ENCODE measurements at regions of chr19 and their contacts with region 1.

Region 1: DNA sequence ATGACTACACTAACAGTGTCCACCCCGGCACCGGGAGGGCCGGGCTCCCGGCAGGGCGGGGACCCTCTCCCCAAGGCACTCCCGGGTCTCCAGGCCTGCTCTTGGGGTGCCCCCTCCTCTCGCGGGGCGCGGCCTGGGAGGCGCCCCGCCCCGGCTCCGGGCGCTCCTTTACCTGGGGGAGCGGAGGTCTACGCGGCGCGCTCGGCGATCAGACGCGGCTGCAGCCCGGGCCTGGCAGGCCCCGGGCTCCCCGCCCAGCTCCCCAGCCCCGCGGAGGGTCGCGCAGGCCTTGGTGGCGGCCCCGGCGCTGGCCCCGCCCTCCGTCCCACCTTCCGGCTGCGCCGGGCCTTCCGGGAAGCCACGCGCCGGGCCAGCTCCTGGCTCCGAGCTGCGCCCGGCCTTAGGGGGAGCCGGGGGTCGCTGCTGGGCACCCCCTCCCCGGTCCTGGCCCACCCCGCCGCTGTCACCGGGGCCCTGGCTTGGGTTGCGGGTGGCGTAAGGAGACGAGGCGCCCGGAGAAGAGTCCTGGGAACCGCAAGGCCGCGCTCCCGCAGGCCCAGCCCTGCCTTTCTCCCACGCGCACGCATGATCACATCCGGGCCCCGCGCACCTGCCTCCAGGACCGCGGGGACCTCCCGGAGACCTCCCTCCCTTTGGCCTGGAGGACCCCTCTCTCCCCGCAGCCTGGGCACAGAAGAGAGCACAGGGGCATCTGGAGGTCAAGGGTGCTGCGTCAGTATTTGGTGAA is at the start of gene C19orf12:
- H3K4me3 ChIP-seq: peak within 1 kb of the TSS; percentile 65
- H3K27ac ChIP-seq: peak within 1 kb of the TSS; percentile 96
- H3K4me1 ChIP-seq: peaks cover 16% of the 10 kb centered on the region
- CTCF ChIP-seq: 0 out of 2 replicates have a peak, but pooled peaks have one; percentile 34

Region 2: DNA sequence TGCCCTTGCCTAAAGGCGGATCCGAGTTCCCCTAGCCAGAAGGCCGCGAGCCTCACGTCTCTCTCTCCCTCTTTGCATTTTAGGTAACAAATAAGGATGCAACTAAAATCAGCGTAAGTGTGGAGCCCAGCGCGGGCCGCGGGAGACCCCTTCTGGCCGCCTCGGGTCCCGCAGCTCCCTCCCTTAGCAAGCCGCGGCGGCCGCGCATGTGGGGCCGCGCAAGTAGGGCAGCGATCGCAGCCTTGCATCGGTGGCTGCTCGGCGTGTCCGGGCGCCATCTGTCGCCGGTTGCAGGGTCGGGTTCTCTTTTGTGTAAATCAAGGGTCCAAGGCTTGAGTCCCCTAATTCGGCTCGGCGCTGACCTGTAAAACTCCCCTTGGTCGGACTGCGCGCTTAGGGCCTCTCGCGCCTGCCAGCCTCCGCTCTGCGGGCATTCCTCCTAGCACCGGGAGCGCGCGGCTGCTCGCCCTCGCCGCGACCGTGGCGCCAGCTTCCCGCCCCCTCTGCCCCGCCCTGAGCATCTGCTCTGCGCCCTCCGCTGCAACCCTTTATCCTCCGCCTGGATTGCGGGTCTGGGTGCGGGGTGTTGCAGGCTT is 186.7 kb before region 1 on chr19:
- CTCF ChIA-PET with region 1: interaction called, 10 read pairs
- POLR2A ChIA-PET with region 1: no interaction called
- H3K4me3 ChIP-seq: peak overlapping the region; percentile 39
- H3K27ac ChIP-seq: peak overlapping the region; percentile 55; the same call in 1 of the 2 replicates
- H3K4me1 ChIP-seq: peaks cover 37% of the 10 kb centered on the region
- CTCF ChIP-seq: peak; percentile 99

Region 3: DNA sequence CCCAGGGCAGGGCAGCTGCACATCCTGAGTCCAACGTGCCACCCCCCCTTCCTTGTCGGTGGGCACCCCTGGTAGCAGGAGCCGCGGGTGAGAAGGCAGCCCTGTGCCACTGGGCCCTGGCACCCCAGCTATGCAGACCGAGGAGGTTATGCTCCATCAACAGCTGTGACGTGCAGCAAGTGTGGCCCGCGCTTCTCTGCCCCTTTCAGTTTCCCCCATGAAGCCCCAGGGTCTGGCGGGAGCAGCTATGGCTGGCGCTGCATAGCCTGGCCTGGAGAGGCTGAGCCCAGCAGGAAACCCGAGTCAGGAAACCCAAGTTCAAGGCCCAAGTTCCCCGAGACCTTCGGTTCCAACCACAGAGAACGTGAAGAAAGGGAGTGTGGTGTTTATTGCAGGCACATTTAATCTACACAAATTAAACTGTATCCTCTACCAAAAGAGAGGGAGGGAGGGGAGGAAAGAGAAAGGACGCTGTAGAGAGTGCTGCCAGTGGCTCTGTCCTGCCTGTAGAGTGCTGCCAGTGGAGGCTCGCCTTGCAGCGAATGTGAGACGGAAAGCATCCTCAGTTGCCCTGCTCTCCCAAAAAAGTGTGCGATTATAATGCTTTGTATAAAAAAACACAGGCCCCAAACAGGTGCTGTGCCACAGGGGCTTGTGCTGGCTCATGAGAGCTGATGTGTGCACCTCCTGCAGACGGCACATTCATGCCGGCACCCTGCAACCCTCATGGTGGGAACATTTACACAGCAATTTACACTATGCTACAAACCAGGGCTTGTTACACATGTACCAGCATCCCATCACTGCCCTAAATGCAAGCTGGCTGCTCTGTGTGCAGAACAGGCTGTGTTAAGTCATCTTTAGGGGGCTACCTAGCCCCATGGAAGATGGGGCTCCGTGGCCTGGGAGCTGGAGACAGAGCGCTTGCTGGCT is 92.7 kb before region 1 on chr19:
- CTCF ChIA-PET with region 1: interaction called, 10 read pairs
- POLR2A ChIA-PET with region 1: interaction called, 4 read pairs
- H3K4me3 ChIP-seq: no peak overlapping the region
- H3K27ac ChIP-seq: no peak overlapping the region
- H3K4me1 ChIP-seq: 0 out of 2 replicates have a peak, but pooled peaks cover 3% of the 10 kb centered on the region
- CTCF ChIP-seq: no peak

Region 4: GRCh38 chr19:29665215-29665825 is 49.8 kb before region 1 on chr19 and contains the start of gene PLEKHF1:
- CTCF ChIA-PET with region 1: interaction called, 16 read pairs
- POLR2A ChIA-PET with region 1: interaction called, 25 read pairs
- H3K4me3 ChIP-seq: peak within 1 kb of the TSS; percentile 59
- H3K27ac ChIP-seq: peak within 1 kb of the TSS; percentile 71; the same call in 1 of the 2 replicates
- H3K4me1 ChIP-seq: peaks cover 52% of the 10 kb centered on the region
- CTCF ChIP-seq: peak; percentile 61; the same call in 1 of the 2 replicates

Region 5: GRCh38 chr19:29694669-29695627 is 20.2 kb before region 1 on chr19:
- CTCF ChIA-PET with region 1: interaction called, 220 read pairs
- POLR2A ChIA-PET with region 1: interaction called, 16 read pairs
- H3K4me3 ChIP-seq: no peak overlapping the region
- H3K27ac ChIP-seq: no peak overlapping the region
- H3K4me1 ChIP-seq: no peaks in the 10 kb centered on the region
- CTCF ChIP-seq: peak; percentile 98

Region 6: DNA sequence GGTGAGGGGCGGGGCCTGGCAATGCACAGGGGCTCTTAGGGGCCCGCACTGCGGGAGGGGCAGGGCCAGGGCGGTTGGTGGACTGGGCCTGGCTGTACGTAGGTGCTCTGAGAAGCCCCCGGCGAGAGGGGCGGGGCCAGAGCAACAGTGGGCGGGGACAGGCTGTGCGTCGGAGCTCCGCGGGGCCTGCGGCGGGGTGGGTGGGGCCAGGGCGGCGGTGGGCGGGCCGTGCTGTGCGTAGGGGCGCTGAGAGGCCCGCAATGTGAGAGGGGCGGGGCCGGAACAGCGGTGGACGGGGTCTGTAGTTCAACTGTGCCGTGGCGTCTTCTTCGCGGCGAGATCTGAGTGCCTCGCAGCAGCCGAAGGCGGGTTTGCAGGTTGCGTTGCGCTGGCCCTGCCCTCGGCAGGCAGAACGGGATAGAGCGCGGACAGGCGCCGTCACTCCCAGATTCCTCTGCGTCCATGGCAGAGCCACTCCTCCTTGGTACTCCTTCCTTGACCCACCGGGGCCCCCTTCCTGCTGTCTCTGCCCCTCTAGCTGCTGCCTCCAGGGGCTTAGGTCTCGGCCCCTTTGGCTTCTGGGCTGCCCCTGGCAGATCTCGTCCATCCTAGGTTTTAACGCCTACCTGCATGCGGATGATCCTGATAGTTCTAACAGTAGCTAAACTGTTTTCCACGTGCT is 129.9 kb after region 1 on chr19:
- CTCF ChIA-PET with region 1: interaction called, 6 read pairs
- POLR2A ChIA-PET with region 1: interaction called, 13 read pairs
- H3K4me3 ChIP-seq: peak overlapping the region; percentile 42
- H3K27ac ChIP-seq: peak overlapping the region; percentile 76
- H3K4me1 ChIP-seq: peaks cover 16% of the 10 kb centered on the region
- CTCF ChIP-seq: peak; percentile 80

Region 7: GRCh38 chr19:30649934-30650614 is 934.9 kb after region 1 on chr19:
- CTCF ChIA-PET with region 1: interaction called, 15 read pairs
- POLR2A ChIA-PET with region 1: no interaction called
- H3K4me3 ChIP-seq: no peak overlapping the region
- H3K27ac ChIP-seq: no peak overlapping the region
- H3K4me1 ChIP-seq: peaks cover 4% of the 10 kb centered on the region; the same call in 1 of the 2 replicates
- CTCF ChIP-seq: peak; percentile 89

Measured in HEK293 (cell line).